ENCODE measurements at regions of chr6 and their contacts with region 1.

Region 1: DNA sequence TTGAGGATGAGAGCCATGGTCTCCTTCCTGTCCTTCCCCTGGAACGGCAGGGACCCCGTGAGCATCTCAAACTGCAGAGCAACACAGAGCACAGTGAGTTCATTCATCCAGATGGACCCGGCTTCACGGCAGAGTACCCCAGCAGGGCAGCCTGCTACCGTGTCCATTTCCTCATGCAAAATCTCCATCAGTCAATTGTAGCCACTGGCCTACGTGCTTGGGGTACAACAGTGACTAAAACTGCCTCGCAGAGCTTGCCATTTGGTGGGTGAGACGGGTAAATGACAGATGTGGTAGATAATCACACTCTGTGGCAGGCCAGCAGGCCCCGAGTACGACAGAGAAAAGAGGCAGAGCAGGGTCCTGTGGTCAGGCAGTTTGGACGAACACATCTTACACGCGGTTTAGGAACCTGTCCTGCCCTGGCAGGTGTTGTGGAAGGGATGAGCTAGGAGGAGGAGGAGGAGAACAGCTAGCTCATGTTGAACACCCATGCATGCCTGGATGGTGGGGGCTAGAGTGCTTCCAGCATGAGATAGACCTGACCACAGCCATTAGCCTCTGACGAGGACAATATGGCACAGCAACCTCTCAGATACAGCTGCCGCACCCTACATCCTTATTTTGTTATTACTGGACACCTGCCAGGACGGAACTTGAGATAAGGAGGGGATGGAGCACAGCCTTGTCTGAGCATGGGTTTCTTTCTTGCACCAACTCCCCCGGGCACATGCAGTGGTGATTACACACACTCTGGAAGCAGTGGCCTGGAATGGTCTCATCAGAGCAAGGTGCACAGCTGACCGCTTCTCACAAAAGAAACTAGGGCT is 95.6 kb downstream of the RAMACL start:
- DNase-seq: peak; percentile 71
- H3K4me3 Mint-ChIP-seq: no peak overlapping the region
- H3K27ac Mint-ChIP-seq: no peak overlapping the region
- H3K4me1 Mint-ChIP-seq: peaks cover 25% of the 10 kb centered on the region
- H3K27me3 Mint-ChIP-seq: no peaks in the 10 kb centered on the region
- CTCF ChIP-seq: no peak

Region 2: GRCh38 chr6:166449036-166449435 is 41.9 kb before region 1 on chr6:
- CTCF ChIA-PET with region 1: no interaction called
- intact Hi-C with region 1: loop called (anchors 2 kb)
- DNase-seq: no peak
- H3K4me3 Mint-ChIP-seq: no peak overlapping the region
- H3K27ac Mint-ChIP-seq: no peak overlapping the region
- H3K4me1 Mint-ChIP-seq: no peaks in the 10 kb centered on the region
- H3K27me3 Mint-ChIP-seq: no peaks in the 10 kb centered on the region
- CTCF ChIP-seq: no peak

Region 3: DNA sequence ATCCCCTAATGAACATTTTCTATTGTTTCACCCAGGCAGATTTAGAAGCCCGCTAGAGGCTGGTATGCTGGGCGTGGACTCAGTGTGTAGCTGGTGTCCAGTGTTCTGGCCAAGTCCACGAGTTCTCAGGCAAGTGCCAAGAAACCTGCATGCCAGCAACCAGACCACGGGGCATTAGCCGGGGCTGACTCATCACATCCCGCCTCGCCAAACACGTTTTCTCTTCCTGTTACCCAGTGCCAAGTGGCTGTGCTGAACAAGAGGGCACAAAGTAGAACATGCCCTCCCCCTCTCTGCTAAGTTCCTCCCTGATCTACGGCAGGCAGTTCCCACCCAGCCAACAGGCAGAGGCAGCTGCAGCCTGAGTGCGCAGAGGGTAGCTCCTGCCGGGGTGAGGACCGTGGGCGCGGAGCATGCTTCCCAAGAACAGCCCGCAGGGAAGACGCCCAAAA is 66.0 kb after region 1 on chr6:
- CTCF ChIA-PET with region 1: no interaction called
- intact Hi-C with region 1: loop called (anchors 1 kb)
- DNase-seq: peak; percentile 94
- H3K4me3 Mint-ChIP-seq: peak overlapping the region; percentile 47
- H3K27ac Mint-ChIP-seq: peak overlapping the region; percentile 81
- H3K4me1 Mint-ChIP-seq: peaks cover 53% of the 10 kb centered on the region
- H3K27me3 Mint-ChIP-seq: no peaks in the 10 kb centered on the region
- CTCF ChIP-seq: no peak